ENCODE measurements at regions of chr5 and their contacts with region 1.

Region 1: DNA sequence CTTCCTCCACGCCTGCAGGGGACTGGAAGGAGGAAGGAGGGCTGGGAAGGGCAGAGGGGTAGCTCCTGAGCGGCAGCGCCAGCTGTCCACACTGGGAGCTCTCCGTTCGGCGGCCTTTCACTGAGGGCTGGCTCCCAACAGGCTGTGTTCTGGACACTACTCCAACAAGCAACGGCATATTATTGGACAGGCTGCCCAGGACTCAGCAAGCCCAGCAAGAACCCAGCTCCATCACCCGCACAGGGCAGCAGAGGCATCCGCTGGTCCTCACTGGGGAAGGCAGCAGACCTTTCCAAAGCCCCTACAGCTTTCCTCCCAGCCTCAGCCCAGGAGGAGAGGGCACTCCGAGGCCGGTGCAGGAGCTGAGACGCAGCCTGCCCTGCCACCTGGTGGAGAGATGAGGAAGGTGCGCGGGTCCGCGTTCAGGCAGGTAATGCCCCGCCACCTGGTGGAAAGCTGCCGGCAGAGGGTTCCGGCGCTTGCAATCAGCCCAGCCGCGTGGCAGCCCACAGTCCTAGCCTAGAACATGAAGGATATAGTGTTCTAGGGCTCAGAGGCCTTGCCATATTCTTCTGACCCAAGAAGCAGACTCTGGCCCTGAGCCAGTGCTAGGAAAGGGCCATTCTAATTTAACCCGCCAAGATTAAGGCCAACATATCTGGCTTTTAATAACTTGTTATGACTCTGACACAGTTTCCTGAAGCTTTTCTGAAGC is 74.4 kb downstream of the NRG2 start:
- DNase-seq: peak; percentile 80 to 92 (median 88)
- ATAC-seq: peak; percentile 100
- H3K4me3 ChIP-seq: no peak overlapping the region
- H3K4me3 Mint-ChIP-seq: no peak overlapping the region
- H3K27ac ChIP-seq: no peak overlapping the region
- H3K27ac Mint-ChIP-seq: no peak overlapping the region
- H3K4me1 ChIP-seq: no peaks in the 10 kb centered on the region
- H3K4me1 Mint-ChIP-seq: no peaks in the 10 kb centered on the region
- H3K27me3 ChIP-seq: no peaks in the 10 kb centered on the region
- H3K27me3 Mint-ChIP-seq: peaks cover 5% of the 10 kb centered on the region
- CTCF ChIP-seq: peak; percentile 99

Region 2: GRCh38 chr5:139755892-139756671 is 212.6 kb before region 1 on chr5:
- CTCF ChIA-PET with region 1: no interaction called
- POLR2A ChIA-PET with region 1: no interaction called
- intact Hi-C with region 1: no loop called
- DNase-seq: peak in 4 of 9 experiments; percentile 22 to 56 (median 44)
- ATAC-seq: peak; percentile 58
- H3K4me3 ChIP-seq: peak overlapping the region; percentile 11 to 34
- H3K4me3 Mint-ChIP-seq: peak overlapping the region; percentile 68
- H3K27ac ChIP-seq: no peak overlapping the region
- H3K27ac Mint-ChIP-seq: no peak overlapping the region
- H3K4me1 ChIP-seq: peaks cover 21% of the 10 kb centered on the region
- H3K4me1 Mint-ChIP-seq: peaks cover 17% of the 10 kb centered on the region
- H3K27me3 ChIP-seq: peaks cover 11 to 14% of the 10 kb centered on the region in 2 experiments
- H3K27me3 Mint-ChIP-seq: peaks cover 30% of the 10 kb centered on the region
- CTCF ChIP-seq: no peak

Region 3: DNA sequence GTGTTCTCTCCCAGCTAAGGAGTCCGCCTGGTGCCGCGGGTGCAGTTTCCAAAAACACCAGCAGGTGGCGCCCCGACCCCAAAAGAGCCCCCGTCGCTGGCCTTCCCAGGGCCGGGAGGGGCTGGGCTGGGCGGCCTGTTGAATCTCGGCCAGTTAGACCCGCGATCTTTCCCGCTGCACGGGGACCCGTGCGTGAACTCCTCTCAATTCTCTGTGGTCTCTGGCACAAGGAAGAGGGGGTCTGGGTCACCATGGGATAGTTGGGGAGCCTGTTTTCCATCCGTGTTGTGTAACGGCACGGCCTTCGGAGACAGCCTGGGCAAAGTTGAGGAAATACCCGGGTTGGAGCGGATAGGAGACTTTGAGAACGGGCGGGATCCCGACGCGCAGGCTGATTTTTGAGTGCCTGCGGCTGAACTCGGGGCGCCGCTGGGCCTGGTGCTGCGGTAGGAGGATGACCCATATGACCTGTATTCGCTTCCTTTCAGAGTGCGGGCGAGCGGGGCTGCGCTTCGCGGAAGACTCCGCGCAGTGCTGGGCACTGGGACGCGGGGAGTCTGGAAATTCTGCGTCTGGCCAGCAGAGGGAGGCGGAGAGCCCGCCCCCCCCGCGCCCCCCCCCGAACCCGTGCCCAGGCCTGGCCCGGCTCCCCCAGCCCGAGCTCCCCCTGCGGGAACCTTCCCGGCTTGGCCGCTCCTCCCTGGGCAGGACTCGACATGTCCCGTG is 181.0 kb before region 1 on chr5:
- CTCF ChIA-PET with region 1: interaction called, 138 read pairs
- POLR2A ChIA-PET with region 1: interaction called, 8 read pairs
- intact Hi-C with region 1: loop called (anchors 1 kb)
- DNase-seq: peak; percentile 69 to 95 (median 84)
- ATAC-seq: peak; percentile 91
- H3K4me3 ChIP-seq: peak overlapping the region; percentile 58 to 63
- H3K4me3 Mint-ChIP-seq: peak overlapping the region; percentile 83
- H3K27ac ChIP-seq: no peak overlapping the region
- H3K27ac Mint-ChIP-seq: no peak overlapping the region
- H3K4me1 ChIP-seq: peaks cover 4% of the 10 kb centered on the region
- H3K4me1 Mint-ChIP-seq: peaks cover 6% of the 10 kb centered on the region
- H3K27me3 ChIP-seq: peaks cover 0 to 9% of the 10 kb centered on the region in 2 experiments
- H3K27me3 Mint-ChIP-seq: peaks cover 26% of the 10 kb centered on the region
- CTCF ChIP-seq: peak; percentile 96

Region 4: DNA sequence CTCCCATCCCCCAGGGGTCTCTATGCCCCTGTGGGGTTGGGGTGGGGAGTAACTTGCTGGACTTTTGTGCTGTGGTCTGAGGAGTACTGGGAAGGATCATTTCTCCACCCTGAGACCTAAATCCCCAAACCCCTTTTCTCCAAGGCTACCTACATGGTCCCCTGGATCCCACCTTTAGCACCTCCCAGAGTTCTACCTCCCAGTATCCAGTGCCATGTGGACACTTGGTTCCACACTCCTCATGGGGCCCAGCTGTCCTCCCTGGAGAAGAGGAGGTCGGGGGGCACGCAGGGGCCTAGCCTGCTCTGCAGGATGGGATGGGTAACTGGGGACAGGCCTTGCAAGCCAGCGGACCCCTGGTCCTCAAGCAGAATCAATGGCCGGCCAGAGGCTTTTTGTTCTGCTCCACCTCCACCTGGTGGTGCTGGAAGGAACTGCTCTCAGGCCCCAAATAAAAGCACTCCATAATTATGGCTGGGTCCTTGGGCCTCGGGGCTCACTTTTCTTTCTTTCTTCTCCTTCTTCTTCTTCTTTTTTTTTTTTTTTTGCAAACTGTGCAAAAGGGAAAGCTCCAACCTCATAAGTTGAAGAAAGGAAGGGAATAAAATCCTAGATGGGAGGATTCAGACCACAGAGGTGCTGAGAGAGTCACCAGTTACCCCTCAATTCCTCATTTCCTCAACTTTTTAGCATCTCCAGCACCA is 104.7 kb before region 1 on chr5:
- CTCF ChIA-PET with region 1: interaction called, 13 read pairs
- POLR2A ChIA-PET with region 1: no interaction called
- intact Hi-C with region 1: loop called in 1 of 2 experiments (anchors 5 kb)
- DNase-seq: peak; percentile 16 to 69 (median 59)
- ATAC-seq: peak; percentile 70
- H3K4me3 ChIP-seq: no peak overlapping the region
- H3K4me3 Mint-ChIP-seq: no peak overlapping the region
- H3K27ac ChIP-seq: no peak overlapping the region
- H3K27ac Mint-ChIP-seq: no peak overlapping the region
- H3K4me1 ChIP-seq: no peaks in the 10 kb centered on the region
- H3K4me1 Mint-ChIP-seq: no peaks in the 10 kb centered on the region
- H3K27me3 ChIP-seq: no peaks in the 10 kb centered on the region
- H3K27me3 Mint-ChIP-seq: peaks cover 10% of the 10 kb centered on the region
- CTCF ChIP-seq: peak; percentile 85

Region 5: DNA sequence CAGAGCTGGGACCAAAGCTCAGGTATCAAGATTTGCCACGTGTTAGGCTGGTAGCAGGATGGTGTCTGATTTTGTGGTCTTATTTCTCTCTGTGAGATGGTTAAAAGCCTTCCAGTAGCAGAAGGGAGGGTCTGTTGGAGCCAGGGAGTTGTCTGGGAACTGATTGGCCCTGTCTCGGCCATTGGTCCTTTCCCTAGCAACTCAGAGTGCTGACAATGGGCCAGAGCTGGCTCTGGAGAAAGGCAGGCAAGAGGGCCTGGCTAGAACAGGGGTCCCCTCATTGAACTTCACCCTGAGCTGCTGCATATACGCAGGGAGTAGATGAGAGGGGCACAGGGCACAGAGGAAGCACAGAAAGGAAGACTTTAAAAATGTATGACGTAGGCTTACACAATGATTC is 80.3 kb before region 1 on chr5:
- CTCF ChIA-PET with region 1: interaction called, 20 read pairs
- POLR2A ChIA-PET with region 1: no interaction called
- intact Hi-C with region 1: no loop called
- DNase-seq: no peak
- ATAC-seq: no peak
- H3K4me3 ChIP-seq: no peak overlapping the region
- H3K4me3 Mint-ChIP-seq: no peak overlapping the region
- H3K27ac ChIP-seq: no peak overlapping the region
- H3K27ac Mint-ChIP-seq: no peak overlapping the region
- H3K4me1 ChIP-seq: no peaks in the 10 kb centered on the region
- H3K4me1 Mint-ChIP-seq: no peaks in the 10 kb centered on the region
- H3K27me3 ChIP-seq: no peaks in the 10 kb centered on the region
- H3K27me3 Mint-ChIP-seq: peaks cover 10% of the 10 kb centered on the region
- CTCF ChIP-seq: no peak

Region 6: GRCh38 chr5:139985733-139986132 is 17.0 kb after region 1 on chr5:
- CTCF ChIA-PET with region 1: interaction called, 22 read pairs
- POLR2A ChIA-PET with region 1: no interaction called
- intact Hi-C with region 1: no loop called
- DNase-seq: no peak
- ATAC-seq: no peak
- H3K4me3 ChIP-seq: no peak overlapping the region
- H3K4me3 Mint-ChIP-seq: no peak overlapping the region
- H3K27ac ChIP-seq: no peak overlapping the region
- H3K27ac Mint-ChIP-seq: no peak overlapping the region
- H3K4me1 ChIP-seq: no peaks in the 10 kb centered on the region
- H3K4me1 Mint-ChIP-seq: no peaks in the 10 kb centered on the region
- H3K27me3 ChIP-seq: peaks cover 0 to 3% of the 10 kb centered on the region in 2 experiments
- H3K27me3 Mint-ChIP-seq: peaks cover 32% of the 10 kb centered on the region
- CTCF ChIP-seq: no peak

Region 7: GRCh38 chr5:140157032-140157803 is 188.5 kb after region 1 on chr5:
- CTCF ChIA-PET with region 1: interaction called, 3 read pairs
- POLR2A ChIA-PET with region 1: no interaction called
- intact Hi-C with region 1: loop called in 1 of 2 experiments (anchors 1 kb)
- DNase-seq: peak; percentile 74 to 91 (median 87)
- ATAC-seq: peak; percentile 100
- H3K4me3 ChIP-seq: no peak overlapping the region
- H3K4me3 Mint-ChIP-seq: peak overlapping the region; percentile 46
- H3K27ac ChIP-seq: no peak overlapping the region
- H3K27ac Mint-ChIP-seq: no peak overlapping the region
- H3K4me1 ChIP-seq: peaks cover 4% of the 10 kb centered on the region
- H3K4me1 Mint-ChIP-seq: peaks cover 6% of the 10 kb centered on the region
- H3K27me3 ChIP-seq: no peaks in the 10 kb centered on the region
- H3K27me3 Mint-ChIP-seq: peaks cover under 1% of the 10 kb centered on the region
- CTCF ChIP-seq: peak; percentile 81